Activated T-helper 1 cell treated with anti-CD3 and anti-CD28 coated beads, Interleukin-12 subunit alpha, Interleukin-12 subunit beta, Interleukin-2, Interleukin-4 antibody, amounts not matched to agents 30 ng/mL and 10 ng/mL and 1 ng/mL, durations not matched to agents 14 hours and 24 hours and 36 hours (primary cell): ENCODE measurements at regions of chr2 and their contacts with region 1.

Region 1: GRCh38 chr2:196277002-196277401 is 105.6 kb upstream of the STK17B start:
- DNase-seq: no peak
- H3K4me3 Mint-ChIP-seq: no peak overlapping the region
- H3K27ac Mint-ChIP-seq: no peak overlapping the region
- H3K4me1 Mint-ChIP-seq: peaks cover 44% of the 10 kb centered on the region
- H3K27me3 Mint-ChIP-seq: no peaks in the 10 kb centered on the region

Region 2: GRCh38 chr2:196077821-196078220 is 199.2 kb before region 1 on chr2:
- intact Hi-C with region 1: loop called (anchors 1 kb)
- DNase-seq: no peak
- H3K4me3 Mint-ChIP-seq: no peak overlapping the region
- H3K27ac Mint-ChIP-seq: no peak overlapping the region
- H3K4me1 Mint-ChIP-seq: peaks cover 19% of the 10 kb centered on the region
- H3K27me3 Mint-ChIP-seq: no peaks in the 10 kb centered on the region

Region 3: DNA sequence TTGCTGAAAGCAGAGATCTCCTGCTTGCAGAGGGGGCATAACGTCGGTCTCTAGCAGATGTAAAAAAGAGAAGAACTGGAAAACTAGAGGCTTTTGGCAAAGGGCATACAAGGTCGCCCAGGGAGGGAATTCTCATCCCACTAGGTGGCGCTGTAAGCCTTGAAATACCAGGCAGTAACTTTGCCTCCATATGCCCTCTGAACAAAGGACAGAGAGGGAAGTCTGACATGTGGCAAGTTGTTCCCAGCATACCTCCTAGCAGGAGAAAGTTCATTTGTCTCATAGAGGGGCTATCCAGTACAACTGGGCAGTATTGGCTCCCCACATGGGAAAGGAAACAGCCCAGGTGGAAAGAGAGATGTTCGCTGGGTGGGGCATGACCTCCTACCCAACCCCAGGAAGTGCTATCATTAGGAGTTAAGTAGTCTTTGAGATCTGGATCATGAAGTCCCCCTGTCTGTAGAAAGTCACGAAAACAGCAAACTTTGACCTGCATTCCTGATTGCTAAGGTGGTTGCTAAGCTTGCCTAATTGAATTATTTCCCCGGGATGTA is 145.5 kb before region 1 on chr2:
- intact Hi-C with region 1: loop called (anchors 1 kb)
- DNase-seq: peak; percentile 41
- H3K4me3 Mint-ChIP-seq: no peak overlapping the region
- H3K27ac Mint-ChIP-seq: peak overlapping the region; percentile 78
- H3K4me1 Mint-ChIP-seq: peaks cover 31% of the 10 kb centered on the region
- H3K27me3 Mint-ChIP-seq: peaks cover 3% of the 10 kb centered on the region

Region 4: GRCh38 chr2:196143730-196144131 is 133.3 kb before region 1 on chr2:
- intact Hi-C with region 1: loop called (anchors 2 kb)
- DNase-seq: no peak
- H3K4me3 Mint-ChIP-seq: peak overlapping the region; percentile 23
- H3K27ac Mint-ChIP-seq: peak overlapping the region; percentile 88
- H3K4me1 Mint-ChIP-seq: peaks cover 59% of the 10 kb centered on the region
- H3K27me3 Mint-ChIP-seq: no peaks in the 10 kb centered on the region

Region 5: DNA sequence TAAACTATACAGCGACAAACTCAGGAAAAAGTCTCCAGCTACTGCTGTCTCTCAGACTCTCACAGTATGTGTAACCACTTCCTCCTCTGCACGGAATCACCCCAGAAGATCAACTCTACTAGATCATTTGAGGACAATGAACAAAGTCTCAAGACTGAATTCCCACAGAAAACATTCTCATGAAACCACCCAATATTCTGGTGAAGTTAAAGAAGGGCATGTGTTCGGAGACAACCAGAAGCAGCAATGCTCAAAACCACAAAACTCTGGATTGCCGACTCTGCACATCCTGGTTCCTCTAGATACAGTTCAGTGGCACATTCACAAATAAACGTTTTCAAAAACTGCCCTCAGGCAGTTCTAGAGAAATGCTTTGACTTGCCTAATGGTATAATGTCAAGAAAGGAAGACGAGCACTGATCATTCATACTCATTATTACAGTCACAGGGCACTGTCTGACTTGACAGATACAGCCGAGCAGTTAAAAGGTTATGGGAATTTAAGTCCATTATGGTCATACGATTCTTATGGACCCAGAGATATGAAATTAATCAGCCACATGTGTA is 13.7 kb before region 1 on chr2:
- intact Hi-C with region 1: loop called (anchors 2 kb)
- DNase-seq: peak; percentile 57
- H3K4me3 Mint-ChIP-seq: peak overlapping the region; percentile 65
- H3K27ac Mint-ChIP-seq: peak overlapping the region; percentile 88
- H3K4me1 Mint-ChIP-seq: peaks cover 79% of the 10 kb centered on the region
- H3K27me3 Mint-ChIP-seq: no peaks in the 10 kb centered on the region

Region 6: GRCh38 chr2:196331143-196331542 is 54.1 kb after region 1 on chr2:
- intact Hi-C with region 1: no loop called
- DNase-seq: no peak
- H3K4me3 Mint-ChIP-seq: no peak overlapping the region
- H3K27ac Mint-ChIP-seq: no peak overlapping the region
- H3K4me1 Mint-ChIP-seq: no peaks in the 10 kb centered on the region
- H3K27me3 Mint-ChIP-seq: peaks cover 2% of the 10 kb centered on the region